ENCODE measurements at regions of chr3 and their contacts with region 1.

Region 1: DNA sequence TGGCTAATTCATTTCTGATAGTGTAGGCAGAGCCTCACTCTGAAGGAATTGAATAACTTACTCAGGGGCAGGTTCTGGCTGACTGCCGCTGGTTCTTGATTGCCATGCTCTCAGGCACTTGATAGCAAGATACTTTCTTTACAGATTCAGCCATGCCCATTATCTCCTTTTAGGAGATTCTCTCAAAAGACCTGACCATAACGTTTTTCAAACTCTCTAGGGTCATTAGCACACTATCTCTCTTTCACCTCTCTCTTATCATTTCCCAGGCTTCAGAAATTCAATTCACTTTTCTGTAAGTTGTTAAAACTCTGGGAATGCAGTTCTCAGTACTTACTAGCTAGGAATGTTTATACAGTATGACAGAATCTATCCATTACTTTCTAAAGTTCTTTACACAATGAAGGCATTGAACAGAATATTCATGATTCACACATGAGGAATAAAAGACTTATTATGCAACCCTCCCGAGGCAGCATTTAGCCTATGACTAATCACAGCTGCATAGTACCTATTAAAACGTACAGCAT is 850.3 kb upstream of the CADM2 start:
- DNase-seq: peak; percentile 96
- ATAC-seq: peak; percentile 97
- H3K4me3 ChIP-seq: peak overlapping the region; percentile 50
- H3K27ac ChIP-seq: peak overlapping the region; percentile 95
- H3K4me1 ChIP-seq: peaks cover 42% of the 10 kb centered on the region
- H3K27me3 ChIP-seq: no peaks in the 10 kb centered on the region
- CTCF ChIP-seq: no peak

Region 2: GRCh38 chr3:83890039-83890762 is 218.3 kb before region 1 on chr3:
- CTCF ChIA-PET with region 1: no interaction called
- POLR2A ChIA-PET with region 1: no interaction called
- intact Hi-C with region 1: loop called (anchors 1 kb)
- DNase-seq: peak; percentile 85
- ATAC-seq: peak; percentile 74
- H3K4me3 ChIP-seq: no peak overlapping the region
- H3K27ac ChIP-seq: peak overlapping the region; percentile 97
- H3K4me1 ChIP-seq: peaks cover 53% of the 10 kb centered on the region
- H3K27me3 ChIP-seq: no peaks in the 10 kb centered on the region
- CTCF ChIP-seq: no peak

Region 3: GRCh38 chr3:84082726-84083125 is 25.8 kb before region 1 on chr3:
- CTCF ChIA-PET with region 1: no interaction called
- POLR2A ChIA-PET with region 1: no interaction called
- intact Hi-C with region 1: loop called (anchors 2 kb)
- DNase-seq: peak; percentile 81
- ATAC-seq: peak; percentile 100
- H3K4me3 ChIP-seq: no peak overlapping the region
- H3K27ac ChIP-seq: peak overlapping the region; percentile 25; the same call in 1 of the 2 replicates
- H3K4me1 ChIP-seq: peaks cover 13% of the 10 kb centered on the region
- H3K27me3 ChIP-seq: no peaks in the 10 kb centered on the region
- CTCF ChIP-seq: no peak

Region 4: DNA sequence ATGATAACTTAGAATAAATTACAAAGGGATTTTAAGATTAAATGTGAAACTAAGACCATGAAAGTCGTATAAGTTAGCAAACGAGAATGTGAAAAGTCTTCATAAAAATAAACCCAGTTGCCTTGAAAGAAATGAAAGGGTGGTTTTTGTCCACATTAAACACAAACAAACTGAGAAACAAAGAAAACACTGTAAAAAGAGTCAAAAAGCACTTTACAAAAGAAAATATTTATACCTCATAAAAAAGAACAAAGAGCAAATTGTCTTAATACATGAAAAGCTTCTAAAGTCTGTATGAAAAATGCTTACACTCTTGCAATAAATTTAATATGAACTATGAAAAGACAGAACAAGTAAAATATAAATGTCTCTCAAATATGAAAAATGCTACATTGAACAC is 15.6 kb before region 1 on chr3:
- CTCF ChIA-PET with region 1: interaction called, 4 read pairs
- POLR2A ChIA-PET with region 1: no interaction called
- intact Hi-C with region 1: loop called (anchors 2 kb)
- DNase-seq: no peak
- ATAC-seq: peak; percentile 61
- H3K4me3 ChIP-seq: peak overlapping the region; percentile 15; the same call in 1 of the 2 replicates
- H3K27ac ChIP-seq: no peak overlapping the region
- H3K4me1 ChIP-seq: no peaks in the 10 kb centered on the region
- H3K27me3 ChIP-seq: no peaks in the 10 kb centered on the region
- CTCF ChIP-seq: no peak

Region 5: DNA sequence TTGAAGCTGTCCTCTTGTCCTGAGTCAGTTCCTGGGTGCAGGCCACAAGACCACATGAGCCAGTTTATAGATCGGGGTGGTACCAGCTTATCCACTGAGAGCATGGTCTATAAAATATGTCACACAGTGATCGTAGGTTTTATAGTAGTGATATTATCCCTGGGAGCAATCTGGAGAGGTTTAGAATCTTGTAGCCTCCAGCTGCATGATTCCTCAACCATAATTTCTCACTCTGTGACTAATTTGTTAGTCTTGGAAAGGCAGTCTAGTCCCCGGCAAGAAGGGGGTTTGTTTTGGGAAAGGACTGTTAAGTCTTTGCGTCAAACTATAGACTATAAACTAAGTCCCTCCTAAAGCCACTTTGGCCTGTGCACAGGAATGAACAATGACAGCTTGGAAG is 157.3 kb after region 1 on chr3:
- CTCF ChIA-PET with region 1: no interaction called
- POLR2A ChIA-PET with region 1: no interaction called
- intact Hi-C with region 1: loop called (anchors 5 kb)
- DNase-seq: peak; percentile 93
- ATAC-seq: peak; percentile 98
- H3K4me3 ChIP-seq: no peak overlapping the region
- H3K27ac ChIP-seq: peak overlapping the region; percentile 98
- H3K4me1 ChIP-seq: peaks cover 14% of the 10 kb centered on the region
- H3K27me3 ChIP-seq: no peaks in the 10 kb centered on the region
- CTCF ChIP-seq: no peak

Measured in PC-3 (cell line).